ENCODE measurements at regions of chr4 and their contacts with region 1.

Region 1: GRCh38 chr4:74133786-74134499 is 24.0 kb upstream of the MTHFD2L start:
- DNase-seq: peak; percentile 88
- H3K4me3 Mint-ChIP-seq: no peak overlapping the region
- H3K27ac Mint-ChIP-seq: peak overlapping the region; percentile 44
- H3K4me1 Mint-ChIP-seq: peaks cover 14% of the 10 kb centered on the region
- H3K27me3 Mint-ChIP-seq: no peaks in the 10 kb centered on the region
- CTCF ChIP-seq: peak; percentile 68

Region 2: DNA sequence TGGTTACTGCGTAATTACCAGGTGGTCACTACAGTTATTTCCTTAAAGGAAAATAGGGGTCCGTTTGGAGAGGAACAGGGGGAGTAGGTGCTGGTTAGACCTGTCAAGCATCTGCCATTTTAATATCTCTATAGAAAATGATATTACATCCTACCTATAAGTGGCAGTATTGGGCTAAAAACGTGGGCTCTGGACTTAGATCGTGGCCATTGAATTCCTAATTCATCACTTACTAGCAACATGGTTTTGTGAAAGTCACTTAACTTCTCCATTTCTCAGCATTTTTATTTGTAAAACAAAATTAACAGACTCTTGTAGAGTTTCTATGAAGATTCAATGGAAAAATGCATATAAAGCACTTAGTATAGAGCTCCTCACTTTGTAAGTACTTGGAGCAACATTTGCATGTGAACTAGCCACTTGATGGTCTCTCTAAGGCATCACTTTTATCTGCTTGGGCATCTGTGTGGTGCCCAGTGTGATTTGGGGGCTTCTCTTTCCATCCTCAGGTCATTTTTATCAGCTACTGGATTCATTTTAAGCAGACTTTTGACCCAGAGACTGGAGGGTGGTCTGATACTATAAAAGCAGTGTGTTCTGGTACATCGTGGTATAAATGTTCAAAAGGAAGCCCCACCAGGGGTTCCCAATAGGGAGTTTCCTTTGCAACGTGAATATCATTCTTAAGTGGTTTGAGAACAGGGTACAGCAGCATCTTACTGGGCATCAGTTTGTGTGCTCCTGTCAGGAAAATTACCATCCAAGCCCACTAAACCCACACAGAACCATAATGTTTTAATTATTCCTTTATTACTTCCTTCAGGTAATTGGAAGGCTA is 471.0 kb before region 1 on chr4:
- CTCF ChIA-PET with region 1: interaction called, 23 read pairs
- POLR2A ChIA-PET with region 1: interaction called, 5 read pairs
- intact Hi-C with region 1: loop called (anchors 2 kb)
- DNase-seq: peak; percentile 70
- H3K4me3 Mint-ChIP-seq: no peak overlapping the region
- H3K27ac Mint-ChIP-seq: peak overlapping the region; percentile 23
- H3K4me1 Mint-ChIP-seq: peaks cover 7% of the 10 kb centered on the region
- H3K27me3 Mint-ChIP-seq: no peaks in the 10 kb centered on the region
- CTCF ChIP-seq: peak; percentile 64

Region 3: GRCh38 chr4:73869130-73870050 is 264.6 kb before region 1 on chr4 and contains the start of gene CXCL1:
- CTCF ChIA-PET with region 1: interaction called, 33 read pairs
- POLR2A ChIA-PET with region 1: interaction called, 14 read pairs
- intact Hi-C with region 1: loop called (anchors 1 kb)
- DNase-seq: peak; percentile 74
- H3K4me3 Mint-ChIP-seq: peak within 1 kb of the TSS; percentile 95
- H3K27ac Mint-ChIP-seq: peak within 1 kb of the TSS; percentile 92
- H3K4me1 Mint-ChIP-seq: peaks cover 37% of the 10 kb centered on the region
- H3K27me3 Mint-ChIP-seq: no peaks in the 10 kb centered on the region
- CTCF ChIP-seq: no peak
- total RNA-seq, gene CXCL1: 35.0 and 49.3 TPM in 2 replicates

Region 4: DNA sequence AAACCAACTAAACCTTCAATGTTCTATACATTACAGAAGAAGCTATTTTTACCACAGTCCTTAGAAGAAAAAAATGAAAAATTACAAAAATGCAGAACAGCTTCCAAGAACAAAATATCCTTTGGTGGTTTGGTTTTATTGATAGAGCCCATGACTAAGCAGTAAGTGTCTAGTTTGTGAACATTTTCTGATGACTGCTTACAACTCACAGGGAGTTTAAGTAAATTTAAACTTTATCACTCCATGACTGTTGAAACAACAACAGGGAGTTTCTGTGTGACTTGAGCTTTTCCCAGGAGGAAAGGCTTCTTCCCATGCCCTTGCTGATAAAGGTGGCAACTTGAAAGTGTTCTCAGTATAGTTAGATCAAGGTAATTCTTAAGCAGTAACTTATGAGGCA is 155.1 kb before region 1 on chr4:
- CTCF ChIA-PET with region 1: no interaction called
- POLR2A ChIA-PET with region 1: no interaction called
- intact Hi-C with region 1: no loop called
- DNase-seq: peak; percentile 36
- H3K4me3 Mint-ChIP-seq: no peak overlapping the region
- H3K27ac Mint-ChIP-seq: no peak overlapping the region
- H3K4me1 Mint-ChIP-seq: peaks cover 9% of the 10 kb centered on the region
- H3K27me3 Mint-ChIP-seq: no peaks in the 10 kb centered on the region
- CTCF ChIP-seq: no peak

Region 5: DNA sequence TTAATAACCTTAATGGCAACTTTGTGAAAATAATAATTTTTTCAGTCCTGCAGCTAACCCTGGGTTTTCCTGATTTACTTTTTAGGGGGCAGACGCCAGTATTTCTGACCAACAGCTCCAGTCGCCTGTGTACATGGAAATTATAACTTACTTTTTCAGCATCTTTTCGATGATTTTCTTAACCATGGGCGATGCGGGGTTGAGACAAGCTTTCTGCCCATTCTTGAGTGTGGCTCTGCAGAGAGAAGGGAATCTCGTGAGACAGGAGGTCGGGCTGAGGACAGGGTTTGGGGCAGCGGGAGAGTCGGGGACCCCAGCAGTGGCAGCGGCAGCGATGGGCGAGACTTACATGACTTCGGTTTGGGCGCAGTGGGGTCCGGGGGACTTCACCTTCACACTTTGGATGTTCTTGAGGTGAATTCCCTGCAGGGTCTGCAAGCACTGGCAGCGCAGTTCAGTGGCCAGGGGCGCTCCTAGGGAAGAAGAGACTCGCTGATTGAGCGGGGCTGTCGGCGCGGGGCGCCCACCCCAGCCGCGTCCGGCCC is 35.4 kb before region 1 on chr4:
- CTCF ChIA-PET with region 1: interaction called, 11 read pairs
- POLR2A ChIA-PET with region 1: interaction called, 35 read pairs
- intact Hi-C with region 1: loop called (anchors 1 kb)
- DNase-seq: no peak
- H3K4me3 Mint-ChIP-seq: peak overlapping the region; percentile 84
- H3K27ac Mint-ChIP-seq: peak overlapping the region; percentile 88
- H3K4me1 Mint-ChIP-seq: peaks cover 34% of the 10 kb centered on the region
- H3K27me3 Mint-ChIP-seq: no peaks in the 10 kb centered on the region
- CTCF ChIP-seq: no peak

Region 6: GRCh38 chr4:74146581-74147129 is 12.7 kb after region 1 on chr4:
- CTCF ChIA-PET with region 1: interaction called, 14 read pairs
- POLR2A ChIA-PET with region 1: interaction called, 8 read pairs
- intact Hi-C with region 1: no loop called
- DNase-seq: no peak
- H3K4me3 Mint-ChIP-seq: no peak overlapping the region
- H3K27ac Mint-ChIP-seq: peak overlapping the region; percentile 25
- H3K4me1 Mint-ChIP-seq: peaks cover 6% of the 10 kb centered on the region
- H3K27me3 Mint-ChIP-seq: no peaks in the 10 kb centered on the region
- CTCF ChIP-seq: no peak

Region 7: GRCh38 chr4:74267998-74268606 is 134.2 kb after region 1 on chr4:
- CTCF ChIA-PET with region 1: no interaction called
- POLR2A ChIA-PET with region 1: no interaction called
- intact Hi-C with region 1: no loop called
- DNase-seq: peak; percentile 85
- H3K4me3 Mint-ChIP-seq: no peak overlapping the region
- H3K27ac Mint-ChIP-seq: peak overlapping the region; percentile 59
- H3K4me1 Mint-ChIP-seq: peaks cover 27% of the 10 kb centered on the region
- H3K27me3 Mint-ChIP-seq: no peaks in the 10 kb centered on the region
- CTCF ChIP-seq: no peak

Region 8: DNA sequence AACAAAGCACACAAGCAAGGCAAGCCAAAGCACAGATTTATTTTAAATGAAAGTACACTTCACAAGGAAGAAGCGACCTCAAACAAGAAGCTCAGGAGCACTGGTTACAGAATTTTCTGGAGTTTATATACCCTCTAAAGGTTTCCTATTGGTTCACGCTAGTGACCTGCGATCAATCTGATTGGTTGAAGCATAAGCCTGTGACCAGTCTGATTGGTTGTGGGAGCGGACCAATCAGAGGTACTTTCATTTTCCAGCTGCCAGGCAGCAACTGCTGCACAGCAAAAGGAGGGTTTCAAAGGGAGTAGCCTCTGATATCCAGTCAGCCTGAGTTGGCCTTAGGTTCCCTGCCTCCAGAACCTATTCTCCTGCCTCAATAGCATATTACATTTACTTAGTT is 306.4 kb after region 1 on chr4:
- CTCF ChIA-PET with region 1: no interaction called
- POLR2A ChIA-PET with region 1: no interaction called
- intact Hi-C with region 1: no loop called
- DNase-seq: no peak
- H3K4me3 Mint-ChIP-seq: no peak overlapping the region
- H3K27ac Mint-ChIP-seq: no peak overlapping the region
- H3K4me1 Mint-ChIP-seq: peaks cover 21% of the 10 kb centered on the region
- H3K27me3 Mint-ChIP-seq: no peaks in the 10 kb centered on the region
- CTCF ChIP-seq: no peak

Measured in MCF 10A (cell line).